PC-3 (cell line): ENCODE measurements at regions of chr3 and their contacts with region 1.

Region 1: GRCh38 chr3:78978037-78978436 is 789.8 kb downstream of the ROBO1 start:
- DNase-seq: peak; percentile 59
- ATAC-seq: peak; percentile 58
- H3K4me3 ChIP-seq: no peak overlapping the region
- H3K27ac ChIP-seq: no peak overlapping the region
- H3K4me1 ChIP-seq: 0 out of 2 replicates have a peak, but pooled peaks cover under 1% of the 10 kb centered on the region
- H3K27me3 ChIP-seq: no peaks in the 10 kb centered on the region
- CTCF ChIP-seq: peak; percentile 79

Region 2: DNA sequence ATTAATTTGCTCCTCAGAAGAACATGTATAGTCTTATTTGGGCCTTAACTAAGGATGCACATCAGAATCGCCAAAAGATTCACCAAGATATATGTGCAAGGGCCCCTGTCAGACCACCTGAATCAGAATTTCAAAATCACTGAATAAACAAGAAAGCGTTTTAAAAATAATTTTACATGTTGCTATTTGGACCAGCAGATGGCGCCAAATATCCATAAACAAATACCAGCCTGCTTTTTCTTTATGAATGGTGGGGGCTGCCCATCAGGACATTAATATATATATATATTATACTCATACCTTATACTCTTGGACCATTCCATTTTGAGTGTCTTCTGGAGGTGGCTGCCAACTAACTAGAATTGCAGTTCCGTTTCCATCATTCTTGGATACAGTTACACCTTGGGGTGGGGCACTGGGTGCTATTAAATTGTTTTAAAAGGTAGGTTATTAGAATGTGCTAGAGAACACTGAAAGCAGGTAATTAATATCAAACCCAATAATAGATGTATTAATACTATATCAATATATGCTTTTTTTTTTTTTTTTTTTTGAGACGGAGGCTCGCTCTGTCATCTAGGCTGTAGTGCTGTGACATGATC is 318.6 kb before region 1 on chr3:
- CTCF ChIA-PET with region 1: no interaction called
- POLR2A ChIA-PET with region 1: no interaction called
- intact Hi-C with region 1: loop called (anchors 1 kb)
- DNase-seq: peak; percentile 76
- ATAC-seq: no peak
- H3K4me3 ChIP-seq: no peak overlapping the region
- H3K27ac ChIP-seq: no peak overlapping the region
- H3K4me1 ChIP-seq: no peaks in the 10 kb centered on the region
- H3K27me3 ChIP-seq: no peaks in the 10 kb centered on the region
- CTCF ChIP-seq: peak; percentile 79

Region 3: GRCh38 chr3:78765671-78766485 is 212.2 kb before region 1 on chr3:
- CTCF ChIA-PET with region 1: no interaction called
- POLR2A ChIA-PET with region 1: no interaction called
- intact Hi-C with region 1: loop called (anchors 5 kb)
- DNase-seq: peak; percentile 50
- ATAC-seq: peak; percentile 83
- H3K4me3 ChIP-seq: peak overlapping the region; percentile 34
- H3K27ac ChIP-seq: peak overlapping the region; percentile 30; the same call in 1 of the 2 replicates
- H3K4me1 ChIP-seq: peaks cover 19% of the 10 kb centered on the region
- H3K27me3 ChIP-seq: no peaks in the 10 kb centered on the region
- CTCF ChIP-seq: no peak

Region 4: DNA sequence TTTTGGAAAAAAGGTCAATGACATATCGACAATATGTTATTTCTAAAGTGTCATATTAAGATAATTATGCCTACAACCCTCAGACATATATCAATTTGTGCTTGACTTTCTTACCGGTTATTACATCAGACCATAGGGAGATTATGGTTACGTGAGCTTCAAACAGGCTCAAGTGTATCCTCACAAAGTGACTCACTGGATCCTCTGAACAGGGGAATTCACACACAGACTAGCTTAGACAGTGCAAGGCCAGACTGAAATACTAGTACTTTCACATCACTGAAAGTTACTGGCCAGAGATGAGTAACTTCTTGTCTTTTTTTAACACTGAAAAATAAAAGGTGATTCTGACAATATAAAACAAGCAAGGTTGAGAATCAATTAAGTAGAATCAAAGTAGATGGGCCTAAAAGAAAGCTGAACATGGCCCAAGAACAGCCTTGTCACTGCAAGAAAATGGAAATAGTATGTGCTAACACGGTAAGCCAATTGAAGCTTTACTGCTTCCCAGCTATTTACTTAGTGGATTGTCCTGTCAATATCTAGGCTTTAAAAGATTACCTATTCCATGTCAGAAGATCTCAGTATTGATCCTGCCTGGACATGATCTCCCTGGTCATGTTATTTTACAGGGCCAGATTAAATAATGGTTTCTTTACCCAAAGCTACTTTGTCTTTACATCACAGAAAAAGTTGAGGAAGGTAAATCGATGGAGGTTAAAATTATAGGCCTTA is 58.8 kb before region 1 on chr3:
- CTCF ChIA-PET with region 1: no interaction called
- POLR2A ChIA-PET with region 1: no interaction called
- intact Hi-C with region 1: loop called (anchors 5 kb)
- DNase-seq: no peak
- ATAC-seq: peak; percentile 67; the same call in 1 of the 2 replicates
- H3K4me3 ChIP-seq: no peak overlapping the region
- H3K27ac ChIP-seq: no peak overlapping the region
- H3K4me1 ChIP-seq: no peaks in the 10 kb centered on the region
- H3K27me3 ChIP-seq: no peaks in the 10 kb centered on the region
- CTCF ChIP-seq: no peak

Region 5: DNA sequence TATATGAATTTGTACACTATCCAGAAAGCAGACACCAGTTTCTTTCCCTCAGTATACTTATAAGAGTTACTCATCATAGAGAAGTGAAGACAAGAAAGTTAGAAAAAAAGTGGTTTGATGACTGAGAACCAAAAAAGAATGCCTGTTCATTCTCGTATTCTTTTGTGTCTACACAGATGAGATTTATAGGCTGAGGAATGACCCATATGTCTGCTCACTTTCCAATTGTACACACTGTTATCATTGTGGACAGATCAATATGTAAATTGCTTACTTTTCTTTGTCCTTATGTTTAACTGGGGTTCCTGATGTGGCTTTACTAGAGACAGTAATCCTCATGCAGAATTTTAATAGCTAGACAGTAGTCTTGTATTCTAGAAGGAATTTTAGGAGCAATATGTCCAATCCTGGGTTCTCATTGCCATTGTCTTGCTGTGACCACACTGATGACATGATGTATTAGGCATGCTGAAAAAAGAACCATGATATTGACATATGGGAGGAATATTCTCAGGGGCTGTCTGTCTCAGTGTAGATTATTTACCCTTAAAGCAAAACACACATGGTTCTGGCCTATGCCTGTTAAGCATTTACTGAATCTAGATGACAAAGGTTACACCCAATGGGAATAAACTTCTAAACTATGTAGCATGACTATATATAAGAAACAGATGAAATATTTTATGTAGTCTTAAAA is 120.1 kb after region 1 on chr3:
- CTCF ChIA-PET with region 1: no interaction called
- POLR2A ChIA-PET with region 1: no interaction called
- intact Hi-C with region 1: no loop called
- DNase-seq: no peak
- ATAC-seq: no peak; the same call in 1 of the 2 replicates
- H3K4me3 ChIP-seq: no peak overlapping the region
- H3K27ac ChIP-seq: no peak overlapping the region
- H3K4me1 ChIP-seq: no peaks in the 10 kb centered on the region
- H3K27me3 ChIP-seq: no peaks in the 10 kb centered on the region; the same call in 1 of the 2 replicates
- CTCF ChIP-seq: no peak